GM12878 (cell line): ENCODE measurements at regions of chr2 and their contacts with region 1.

Region 1: DNA sequence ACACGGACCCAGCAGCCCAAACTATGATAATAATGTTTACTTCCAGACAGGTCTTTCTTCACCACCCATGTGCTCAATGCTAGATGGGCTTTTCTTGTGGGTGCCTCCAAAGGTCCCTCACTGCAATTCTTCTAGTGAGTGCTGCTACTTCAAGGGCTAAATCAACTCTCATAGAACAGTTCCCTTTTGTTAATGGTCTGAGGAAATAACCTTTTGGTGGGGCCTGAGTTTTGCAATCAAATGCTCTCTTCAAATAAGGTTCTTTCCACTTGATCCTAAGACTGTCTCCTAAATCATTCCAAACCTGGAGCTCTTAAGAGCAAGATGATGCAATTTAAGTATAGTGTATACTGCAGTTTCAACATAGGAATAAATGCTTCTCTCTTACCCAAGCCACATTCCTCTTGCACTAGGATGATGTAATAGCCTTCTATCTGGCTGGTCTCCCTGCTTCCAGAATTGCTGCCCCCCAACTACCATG is 6.0 kb downstream of the NEMP2 start:
- DNase-seq: no peak
- ATAC-seq: peak; percentile 6; the same call in 1 of the 3 replicates
- H3K4me3 ChIP-seq: no peak overlapping the region
- H3K27ac ChIP-seq: no peak overlapping the region
- H3K4me1 ChIP-seq: peaks cover 44% of the 10 kb centered on the region
- H3K27me3 ChIP-seq: no peaks in the 10 kb centered on the region
- CTCF ChIP-seq: no peak
- EP300 ChIP-seq: no peak
- POLR2A ChIP-seq: no peak
- RAD21 ChIP-seq: no peak

Region 2: GRCh38 chr2:190517468-190517867 is 11.1 kb before region 1 on chr2:
- CTCF ChIA-PET with region 1: interaction called, 12 read pairs
- POLR2A ChIA-PET with region 1: interaction called, 10 read pairs
- RAD21 ChIA-PET with region 1: interaction called, 36 read pairs
- SMC1A ChIA-PET with region 1: interaction called, 36 read pairs
- in situ Hi-C with region 1: no loop called
- intact Hi-C with region 1: no loop called
- DNase-seq: no peak
- ATAC-seq: no peak
- H3K4me3 ChIP-seq: no peak overlapping the region
- H3K27ac ChIP-seq: no peak overlapping the region
- H3K4me1 ChIP-seq: peaks cover 7% of the 10 kb centered on the region
- H3K27me3 ChIP-seq: no peaks in the 10 kb centered on the region
- CTCF ChIP-seq: no peak
- EP300 ChIP-seq: no peak
- POLR2A ChIP-seq: no peak
- RAD21 ChIP-seq: no peak

Region 3: GRCh38 chr2:190804182-190804795 is 275.7 kb after region 1 on chr2:
- CTCF ChIA-PET with region 1: no interaction called
- POLR2A ChIA-PET with region 1: no interaction called
- RAD21 ChIA-PET with region 1: no interaction called
- SMC1A ChIA-PET with region 1: interaction called, 3 read pairs
- in situ Hi-C with region 1: no loop called
- intact Hi-C with region 1: loop called (anchors 5 kb)
- DNase-seq: no peak
- ATAC-seq: no peak
- H3K4me3 ChIP-seq: no peak overlapping the region
- H3K27ac ChIP-seq: no peak overlapping the region
- H3K4me1 ChIP-seq: peaks cover 5% of the 10 kb centered on the region; the same call in 1 of the 2 replicates
- H3K27me3 ChIP-seq: no peaks in the 10 kb centered on the region
- CTCF ChIP-seq: peak; percentile 34 to 63 (median 48); a peak in 5 of 6 replicates
- EP300 ChIP-seq: no peak
- POLR2A ChIP-seq: no peak
- RAD21 ChIP-seq: peak; percentile 89

Region 4: DNA sequence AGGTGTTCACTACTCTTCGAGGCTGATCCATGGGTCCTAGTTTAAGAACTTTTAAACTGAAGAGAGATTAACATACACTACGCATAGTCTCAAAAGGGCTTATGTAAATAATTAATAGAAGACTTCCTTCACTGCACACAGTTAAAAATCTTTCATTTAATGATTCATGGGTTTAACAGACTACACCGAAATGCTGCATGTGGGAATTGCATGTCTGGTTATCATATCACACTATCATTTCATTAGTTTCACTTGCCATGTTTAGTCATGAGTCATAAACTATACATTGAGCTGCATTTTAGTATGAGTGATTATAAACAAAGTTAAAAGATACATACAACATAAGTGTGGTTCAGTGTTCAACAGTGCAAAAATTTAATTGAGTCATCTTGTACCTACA is 383.3 kb after region 1 on chr2:
- CTCF ChIA-PET with region 1: no interaction called
- POLR2A ChIA-PET with region 1: no interaction called
- RAD21 ChIA-PET with region 1: no interaction called
- SMC1A ChIA-PET with region 1: no interaction called
- in situ Hi-C with region 1: no loop called
- intact Hi-C with region 1: no loop called
- DNase-seq: peak; percentile 43
- ATAC-seq: peak; percentile 87
- H3K4me3 ChIP-seq: no peak overlapping the region
- H3K27ac ChIP-seq: peak overlapping the region; percentile 27; the same call in 1 of the 2 replicates
- H3K4me1 ChIP-seq: no peaks in the 10 kb centered on the region
- H3K27me3 ChIP-seq: no peaks in the 10 kb centered on the region
- CTCF ChIP-seq: no peak
- EP300 ChIP-seq: peak; percentile 33 to 42; a peak in 1 of 4 replicates
- POLR2A ChIP-seq: no peak
- RAD21 ChIP-seq: no peak

Region 5: DNA sequence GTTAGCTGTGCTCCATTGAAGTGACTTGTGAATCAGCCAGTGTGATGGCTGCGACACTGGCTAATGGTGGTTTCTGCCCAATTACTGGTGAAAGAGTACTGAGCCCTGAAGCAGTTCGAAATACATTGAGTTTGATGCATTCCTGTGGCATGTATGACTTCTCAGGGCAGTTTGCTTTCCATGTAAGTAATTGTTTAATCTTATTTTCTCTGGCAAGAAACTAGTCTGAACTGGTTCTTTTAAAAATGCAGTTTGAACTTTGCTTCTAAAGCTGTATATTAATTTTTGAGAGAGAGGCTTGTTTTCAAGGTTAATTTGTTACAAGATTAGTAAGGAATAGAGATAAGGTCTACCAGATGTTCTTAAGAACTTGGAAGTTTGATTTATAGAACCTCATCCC is 398.7 kb after region 1 on chr2:
- CTCF ChIA-PET with region 1: no interaction called
- POLR2A ChIA-PET with region 1: no interaction called
- RAD21 ChIA-PET with region 1: no interaction called
- SMC1A ChIA-PET with region 1: no interaction called
- in situ Hi-C with region 1: no loop called
- intact Hi-C with region 1: no loop called
- DNase-seq: no peak
- ATAC-seq: no peak
- H3K4me3 ChIP-seq: no peak overlapping the region
- H3K27ac ChIP-seq: no peak overlapping the region
- H3K4me1 ChIP-seq: no peaks in the 10 kb centered on the region
- H3K27me3 ChIP-seq: no peaks in the 10 kb centered on the region
- CTCF ChIP-seq: no peak
- EP300 ChIP-seq: no peak
- POLR2A ChIP-seq: no peak
- RAD21 ChIP-seq: no peak